Spleen (tissue), 13 donors: ENCODE measurements at regions of chr3 and their contacts with region 1.

Region 1: GRCh38 chr3:107271787-107272387 is 105.4 kb upstream of the CCDC54 start:
- DNase-seq: no peak
- H3K4me3 ChIP-seq: no peak overlapping the region
- H3K27ac ChIP-seq: no peak overlapping the region
- H3K4me1 ChIP-seq: peaks cover 0 to 7% (median 0%) of the 10 kb centered on the region in 6 donors
- H3K27me3 ChIP-seq: no peaks in the 10 kb centered on the region
- CTCF ChIP-seq: peak; percentile 37 to 64 (median 61)
- POLR2A ChIP-seq: no peak

Region 2: DNA sequence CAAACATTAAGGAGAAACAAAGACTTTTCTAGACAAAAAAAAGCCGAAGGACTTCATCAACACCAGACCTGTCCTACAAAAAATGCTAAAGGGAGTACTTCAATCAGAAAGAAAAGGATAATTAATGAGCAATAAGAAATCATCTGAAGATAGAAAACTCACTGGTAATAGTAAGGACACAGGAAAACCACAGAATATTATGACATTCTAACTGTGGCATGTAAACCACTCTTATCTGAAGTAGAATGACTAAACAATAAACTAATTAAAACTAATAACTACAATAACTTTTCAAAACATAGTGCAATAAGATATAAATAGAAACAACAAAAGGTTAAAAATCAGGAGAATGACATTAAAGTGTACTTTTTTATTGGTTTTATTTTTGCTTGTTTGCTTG is 479.2 kb before region 1 on chr3:
- intact Hi-C with region 1: no loop called
- DNase-seq: no peak
- H3K4me3 ChIP-seq: no peak overlapping the region
- H3K27ac ChIP-seq: no peak overlapping the region
- H3K4me1 ChIP-seq: no peaks in the 10 kb centered on the region
- H3K27me3 ChIP-seq: no peaks in the 10 kb centered on the region
- CTCF ChIP-seq: no peak
- POLR2A ChIP-seq: no peak

Region 3: GRCh38 chr3:107092121-107092520 is 179.8 kb before region 1 on chr3:
- intact Hi-C with region 1: no loop called
- DNase-seq: no peak
- H3K4me3 ChIP-seq: no peak overlapping the region
- H3K27ac ChIP-seq: no peak overlapping the region
- H3K4me1 ChIP-seq: no peaks in the 10 kb centered on the region
- H3K27me3 ChIP-seq: no peaks in the 10 kb centered on the region
- CTCF ChIP-seq: no peak
- POLR2A ChIP-seq: no peak

Region 4: DNA sequence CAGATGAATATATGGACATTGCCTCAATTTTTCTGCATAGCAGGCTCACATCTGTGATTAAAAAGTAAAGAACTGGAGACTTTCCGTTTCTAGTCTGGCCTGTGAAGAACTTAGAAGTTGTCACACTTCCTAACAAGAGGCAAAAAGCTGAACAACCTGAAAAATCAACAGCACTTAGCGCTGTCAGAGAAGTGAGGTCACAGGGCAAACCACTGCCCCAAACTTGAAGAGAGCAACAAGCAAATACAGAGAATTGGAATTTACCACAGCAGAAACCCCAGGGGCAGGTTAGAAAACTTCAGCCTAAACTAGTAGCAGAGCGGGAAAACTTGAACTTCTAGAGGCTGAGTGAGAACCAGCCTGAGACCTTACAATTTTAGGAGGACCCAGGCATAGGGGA is 144.3 kb after region 1 on chr3:
- intact Hi-C with region 1: loop called (anchors 5 kb)
- DNase-seq: no peak
- H3K4me3 ChIP-seq: no peak overlapping the region
- H3K27ac ChIP-seq: no peak overlapping the region
- H3K4me1 ChIP-seq: peaks cover 0 to 7% (median 2%) of the 10 kb centered on the region in 6 donors
- H3K27me3 ChIP-seq: no peaks in the 10 kb centered on the region
- CTCF ChIP-seq: no peak
- POLR2A ChIP-seq: no peak